Activated B cell treated with CpG ODN at 0.5 μM for 24 hours (primary cell): ENCODE measurements at regions of chr12 and their contacts with region 1.

Region 1: DNA sequence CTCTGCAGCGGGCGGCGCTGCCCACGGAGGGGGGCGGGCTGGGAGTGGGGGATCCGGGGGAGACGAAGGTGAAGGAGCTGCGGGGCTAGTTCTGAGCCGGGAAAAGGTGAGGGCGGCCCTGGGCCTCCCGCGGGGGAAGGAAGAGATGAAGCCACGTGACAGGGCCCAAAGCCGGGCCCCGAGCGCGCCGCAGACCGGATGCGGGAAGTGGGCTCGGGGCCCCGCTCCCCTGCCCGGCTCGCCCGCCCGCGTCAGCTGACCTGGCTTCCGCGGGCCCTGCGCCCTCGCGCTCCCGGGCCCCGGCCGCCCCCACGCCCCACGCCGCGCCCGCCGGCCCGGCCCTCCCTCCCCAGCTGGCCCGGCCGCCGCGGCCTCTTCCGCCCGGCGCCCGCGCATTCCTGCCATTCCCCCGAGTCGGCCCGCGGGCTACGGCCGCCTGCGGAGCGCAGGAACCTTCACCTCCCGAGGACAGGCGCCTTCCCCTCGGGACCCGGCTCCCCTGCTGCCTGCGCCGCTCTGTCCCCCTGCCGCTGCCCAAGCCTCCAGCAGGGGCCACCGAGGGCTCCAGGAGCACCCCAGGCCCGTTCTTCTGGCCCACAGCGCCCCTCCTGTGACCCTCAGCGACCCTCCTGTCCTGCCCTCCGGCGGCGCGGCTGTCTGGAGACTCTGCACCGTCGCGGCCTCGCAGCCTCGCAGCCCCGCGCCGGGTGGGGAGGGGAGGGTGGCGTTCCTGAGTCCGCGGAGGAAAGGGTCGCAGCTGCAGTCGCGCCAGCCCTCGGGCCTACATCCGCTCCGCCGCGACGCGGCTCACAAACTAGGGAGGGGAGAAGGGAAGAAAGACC is 20.4 kb downstream of the NINJ2 start:
- DNase-seq: peak; percentile 77
- ATAC-seq: peak; percentile 72
- H3K4me3 Mint-ChIP-seq: peak overlapping the region; percentile 91
- H3K27ac Mint-ChIP-seq: peak overlapping the region; percentile 96
- H3K4me1 Mint-ChIP-seq: peaks cover 47% of the 10 kb centered on the region
- H3K27me3 Mint-ChIP-seq: no peaks in the 10 kb centered on the region
- CTCF ChIP-seq: no peak

Region 2: GRCh38 chr12:252636-253035 is 390.2 kb before region 1 on chr12:
- CTCF ChIA-PET with region 1: no interaction called
- POLR2A ChIA-PET with region 1: no interaction called
- intact Hi-C with region 1: no loop called
- DNase-seq: no peak
- ATAC-seq: no peak
- H3K4me3 Mint-ChIP-seq: no peak overlapping the region
- H3K27ac Mint-ChIP-seq: no peak overlapping the region
- H3K4me1 Mint-ChIP-seq: no peaks in the 10 kb centered on the region
- H3K27me3 Mint-ChIP-seq: peaks cover 35% of the 10 kb centered on the region
- CTCF ChIP-seq: no peak

Region 3: DNA sequence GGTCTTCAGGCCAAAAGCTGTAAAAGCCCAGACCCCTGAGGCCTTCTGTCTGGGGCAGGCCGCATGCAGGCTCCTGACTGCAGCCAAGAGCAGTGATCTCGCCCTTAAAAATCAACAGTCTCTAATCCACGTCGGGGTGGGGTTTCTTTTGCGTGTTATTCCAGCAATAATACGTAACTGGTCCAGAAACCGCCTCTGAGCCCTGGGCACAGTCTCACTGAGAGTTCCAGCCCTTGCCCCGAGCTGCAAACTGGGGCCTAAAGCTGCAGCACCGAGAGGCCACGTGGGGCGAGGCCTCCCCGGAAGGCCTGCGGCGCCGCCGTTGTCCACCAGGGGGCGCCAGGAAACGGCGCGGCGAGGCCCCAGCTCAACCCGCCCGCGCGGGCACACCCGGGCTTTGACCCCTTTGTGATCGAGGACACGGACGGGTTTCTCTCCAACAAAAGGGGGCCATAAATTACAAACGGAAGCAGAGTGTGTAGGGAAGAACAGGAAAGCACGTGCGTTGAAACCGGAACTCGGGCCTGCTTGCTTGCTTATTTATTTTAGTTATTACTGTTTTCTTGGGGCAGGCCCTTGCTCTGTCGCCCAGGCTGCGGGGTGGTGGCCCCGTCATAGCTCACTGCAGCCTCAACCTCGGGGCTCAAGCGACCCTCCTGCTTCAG is 66.8 kb before region 1 on chr12:
- CTCF ChIA-PET with region 1: no interaction called
- POLR2A ChIA-PET with region 1: interaction called, 4 read pairs
- intact Hi-C with region 1: loop called (anchors 2 kb)
- DNase-seq: peak; percentile 91
- ATAC-seq: peak; percentile 99
- H3K4me3 Mint-ChIP-seq: peak overlapping the region; percentile 75
- H3K27ac Mint-ChIP-seq: no peak overlapping the region
- H3K4me1 Mint-ChIP-seq: peaks cover 11% of the 10 kb centered on the region
- H3K27me3 Mint-ChIP-seq: no peaks in the 10 kb centered on the region
- CTCF ChIP-seq: peak; percentile 70

Region 4: GRCh38 chr12:630656-631632 is 11.9 kb before region 1 on chr12:
- CTCF ChIA-PET with region 1: interaction called, 6 read pairs
- POLR2A ChIA-PET with region 1: interaction called, 12 read pairs
- intact Hi-C with region 1: loop called (anchors 1 kb)
- DNase-seq: peak; percentile 27
- ATAC-seq: peak; percentile 86
- H3K4me3 Mint-ChIP-seq: peak overlapping the region; percentile 80
- H3K27ac Mint-ChIP-seq: peak overlapping the region; percentile 83
- H3K4me1 Mint-ChIP-seq: peaks cover 47% of the 10 kb centered on the region
- H3K27me3 Mint-ChIP-seq: no peaks in the 10 kb centered on the region
- CTCF ChIP-seq: no peak

Region 5: GRCh38 chr12:666766-667308 is 24.0 kb after region 1 on chr12:
- CTCF ChIA-PET with region 1: interaction called, 12 read pairs
- POLR2A ChIA-PET with region 1: interaction called, 67 read pairs
- intact Hi-C with region 1: loop called (anchors 1 kb)
- DNase-seq: no peak
- ATAC-seq: no peak
- H3K4me3 Mint-ChIP-seq: peak overlapping the region; percentile 57
- H3K27ac Mint-ChIP-seq: peak overlapping the region; percentile 80
- H3K4me1 Mint-ChIP-seq: peaks cover 58% of the 10 kb centered on the region
- H3K27me3 Mint-ChIP-seq: no peaks in the 10 kb centered on the region
- CTCF ChIP-seq: no peak

Region 6: DNA sequence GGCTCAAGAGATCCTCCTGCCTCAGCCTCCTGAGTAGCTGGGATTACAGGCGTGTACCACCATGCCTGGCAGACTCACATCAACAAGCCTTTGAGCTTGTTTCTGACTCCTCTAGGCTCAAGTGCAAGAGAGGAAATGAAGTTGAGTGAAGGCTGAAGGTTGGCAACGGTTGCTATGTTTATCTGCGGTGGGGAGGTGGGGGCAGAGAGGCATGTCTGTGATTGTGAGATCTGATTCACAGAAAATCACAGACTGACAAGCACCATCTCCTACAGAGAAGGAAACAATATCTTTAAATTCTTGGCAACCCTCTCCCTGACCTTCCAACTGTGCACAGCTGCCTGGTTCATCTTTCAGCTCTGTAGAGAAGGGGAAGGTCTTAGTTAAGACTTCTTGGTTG is 42.5 kb after region 1 on chr12:
- CTCF ChIA-PET with region 1: no interaction called
- POLR2A ChIA-PET with region 1: interaction called, 19 read pairs
- intact Hi-C with region 1: loop called (anchors 1 kb)
- DNase-seq: peak; percentile 64
- ATAC-seq: peak; percentile 79
- H3K4me3 Mint-ChIP-seq: peak overlapping the region; percentile 62
- H3K27ac Mint-ChIP-seq: peak overlapping the region; percentile 99
- H3K4me1 Mint-ChIP-seq: peaks cover 50% of the 10 kb centered on the region
- H3K27me3 Mint-ChIP-seq: no peaks in the 10 kb centered on the region
- CTCF ChIP-seq: no peak

Region 7: GRCh38 chr12:789852-790563 is 147.2 kb after region 1 on chr12:
- CTCF ChIA-PET with region 1: no interaction called
- POLR2A ChIA-PET with region 1: no interaction called
- intact Hi-C with region 1: no loop called
- DNase-seq: no peak
- ATAC-seq: peak; percentile 25
- H3K4me3 Mint-ChIP-seq: no peak overlapping the region
- H3K27ac Mint-ChIP-seq: peak overlapping the region; percentile 3
- H3K4me1 Mint-ChIP-seq: peaks cover 67% of the 10 kb centered on the region
- H3K27me3 Mint-ChIP-seq: no peaks in the 10 kb centered on the region
- CTCF ChIP-seq: no peak